ENCODE measurements at regions of chr14 and their contacts with region 1.

Region 1: DNA sequence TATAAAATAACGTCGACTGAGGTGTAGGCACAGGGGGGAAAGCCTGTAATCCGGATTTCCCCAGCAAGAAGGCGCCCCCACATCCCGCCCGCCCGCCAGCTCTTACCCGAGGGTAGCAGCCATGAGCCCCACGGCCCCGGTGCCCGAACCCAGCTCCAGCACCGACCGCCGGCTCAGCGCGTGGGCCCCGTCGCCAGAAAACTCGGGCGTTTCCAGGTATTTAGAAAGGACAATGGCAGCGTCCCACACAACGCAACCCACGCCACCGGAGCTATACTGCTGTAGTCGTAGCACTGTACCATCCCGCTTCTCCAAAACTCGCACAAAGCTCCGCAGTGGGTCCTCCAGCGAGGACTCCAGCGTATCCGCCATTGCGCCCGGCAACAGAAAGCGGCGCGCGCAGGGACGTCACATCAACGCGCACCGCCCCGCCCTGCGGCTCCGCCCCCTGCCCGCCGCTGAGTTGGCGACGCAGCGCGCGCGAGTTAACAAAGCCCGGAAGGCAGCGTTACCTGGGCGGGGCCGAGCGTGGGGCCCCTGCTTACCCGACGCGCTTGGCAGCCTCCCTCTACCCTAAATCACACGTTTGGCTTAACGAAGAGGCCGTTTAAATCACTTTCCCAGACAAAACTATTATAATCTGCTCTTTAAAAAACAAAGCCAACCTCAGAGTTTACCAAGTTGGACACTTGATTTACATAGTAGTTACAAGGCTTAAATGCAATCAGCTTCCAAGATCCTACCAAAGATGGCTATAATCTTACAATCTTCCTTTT is at the start of gene VCPKMT:
- DNase-seq: peak; percentile 97
- H3K4me3 ChIP-seq: peak within 1 kb of the TSS; percentile 64 to 76 (median 76)
- H3K27ac ChIP-seq: peak within 1 kb of the TSS; percentile 86 to 89 (median 86)
- H3K4me1 ChIP-seq: peaks cover 15 to 28% (median 23%) of the 10 kb centered on the region in 4 donors
- H3K27me3 ChIP-seq: no peaks in the 10 kb centered on the region
- CTCF ChIP-seq: no peak
- EP300 ChIP-seq: no peak
- POLR2A ChIP-seq: peak; percentile 82
- total RNA-seq, gene VCPKMT: 3.1 to 5.4 (median 4.8) TPM

Region 2: GRCh38 chr14:49767562-49768300 is 348.6 kb before region 1 on chr14 and contains the start of gene KLHDC2:
- intact Hi-C with region 1: loop called (anchors 10 kb)
- DNase-seq: peak; percentile 93
- H3K4me3 ChIP-seq: peak within 1 kb of the TSS; percentile 91 to 97 (median 96)
- H3K27ac ChIP-seq: peak within 1 kb of the TSS; percentile 93 to 99 (median 98)
- H3K4me1 ChIP-seq: peaks cover 24 to 37% (median 32%) of the 10 kb centered on the region in 4 donors
- H3K27me3 ChIP-seq: no peaks in the 10 kb centered on the region
- CTCF ChIP-seq: peak; percentile 39 to 53 (median 44)
- EP300 ChIP-seq: no peak
- POLR2A ChIP-seq: peak; percentile 47
- total RNA-seq, gene KLHDC2: 72.2 to 102 (median 85.8) TPM

Region 3: DNA sequence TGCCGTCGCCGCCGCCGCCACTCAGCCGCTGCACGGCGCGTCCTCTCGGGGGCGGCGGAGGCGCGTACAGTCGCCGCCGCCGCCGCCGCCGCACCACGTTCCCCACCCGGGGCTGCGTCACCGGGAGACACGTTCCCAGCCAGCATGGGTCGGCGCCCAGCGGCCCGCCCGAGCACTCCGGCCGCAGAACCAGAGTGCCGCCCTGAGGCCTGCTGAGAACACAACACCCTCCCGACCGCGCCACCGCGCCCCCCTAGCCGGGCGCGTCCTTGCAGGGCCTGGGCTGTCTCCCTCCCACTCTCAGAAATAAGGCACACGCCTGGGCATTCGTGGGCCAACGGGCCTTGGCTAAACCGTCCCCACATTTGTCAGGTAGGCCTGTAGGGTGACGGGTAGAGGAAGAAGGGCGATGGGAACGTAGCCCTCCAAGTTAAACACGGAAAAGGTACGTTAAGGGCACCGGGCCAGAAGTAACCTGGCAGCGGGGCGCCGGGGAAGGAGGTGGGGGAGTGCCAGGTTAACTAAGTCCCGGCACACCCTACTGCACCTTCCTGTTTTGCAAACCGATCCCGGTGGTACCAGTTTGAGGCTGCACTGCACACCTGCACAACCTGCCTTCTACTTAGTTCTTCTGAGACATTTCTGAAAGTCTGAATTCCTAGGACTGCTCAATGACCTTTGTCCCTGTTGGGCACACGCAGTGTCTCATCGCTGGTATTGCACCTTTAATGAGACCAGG is 416.3 kb after region 1 on chr14 and contains the start of gene MAP4K5:
- intact Hi-C with region 1: loop called (anchors 10 kb)
- DNase-seq: peak; percentile 95
- H3K4me3 ChIP-seq: peak within 1 kb of the TSS; percentile 87 to 96 (median 92)
- H3K27ac ChIP-seq: peak within 1 kb of the TSS; percentile 93 to 98 (median 97)
- H3K4me1 ChIP-seq: peaks cover 12 to 47% (median 43%) of the 10 kb centered on the region in 4 donors
- H3K27me3 ChIP-seq: no peaks in the 10 kb centered on the region
- CTCF ChIP-seq: peak; percentile 95 to 97 (median 96)
- EP300 ChIP-seq: no peak
- POLR2A ChIP-seq: peak; percentile 43
- total RNA-seq, gene MAP4K5: 84.4 to 108 (median 91.2) TPM